ENCODE measurements at regions of chr10 and their contacts with region 1.

Region 1: GRCh38 chr10:28367929-28368484 is 65.1 kb upstream of the MPP7 start:
- DNase-seq: peak; percentile 76
- ATAC-seq: peak; percentile 90
- H3K4me3 Mint-ChIP-seq: peak overlapping the region; percentile 54
- H3K27ac Mint-ChIP-seq: peak overlapping the region; percentile 96
- H3K4me1 Mint-ChIP-seq: peaks cover 44% of the 10 kb centered on the region
- H3K27me3 Mint-ChIP-seq: no peaks in the 10 kb centered on the region

Region 2: GRCh38 chr10:27504007-27504807 is 863.8 kb before region 1 on chr10 and contains the start of gene RAB18:
- CTCF ChIA-PET with region 1: interaction called, 4 read pairs
- POLR2A ChIA-PET with region 1: no interaction called
- intact Hi-C with region 1: loop called in 1 of 2 experiments (anchors 1 kb)
- DNase-seq: peak; percentile 99
- ATAC-seq: peak; percentile 98
- H3K4me3 Mint-ChIP-seq: peak within 1 kb of the TSS; percentile 93
- H3K27ac Mint-ChIP-seq: peak within 1 kb of the TSS; percentile 93
- H3K4me1 Mint-ChIP-seq: peaks cover 46% of the 10 kb centered on the region
- H3K27me3 Mint-ChIP-seq: no peaks in the 10 kb centered on the region
- total RNA-seq, gene RAB18: 44.6 to 49.3 TPM

Region 3: DNA sequence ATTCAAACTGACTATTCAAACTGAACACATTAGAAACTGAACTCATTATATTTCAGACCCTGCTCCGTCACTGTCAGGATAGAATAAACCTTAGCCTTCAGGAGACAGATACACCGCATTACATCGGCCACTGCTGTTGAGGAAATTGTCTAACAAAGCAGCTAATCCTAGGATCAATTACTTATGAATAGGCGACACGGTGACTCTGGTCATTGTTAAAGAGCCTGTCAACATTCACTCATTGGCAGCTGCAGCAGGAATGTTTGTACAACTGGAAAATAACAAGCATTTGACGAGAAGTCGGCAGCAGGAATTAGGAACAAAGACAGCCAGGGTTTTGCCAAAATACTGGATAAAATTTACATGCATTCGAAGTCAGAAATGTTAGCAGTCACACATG is 510.4 kb before region 1 on chr10:
- CTCF ChIA-PET with region 1: no interaction called
- POLR2A ChIA-PET with region 1: no interaction called
- intact Hi-C with region 1: no loop called
- DNase-seq: no peak
- ATAC-seq: no peak
- H3K4me3 Mint-ChIP-seq: no peak overlapping the region
- H3K27ac Mint-ChIP-seq: no peak overlapping the region
- H3K4me1 Mint-ChIP-seq: no peaks in the 10 kb centered on the region
- H3K27me3 Mint-ChIP-seq: peaks cover 3% of the 10 kb centered on the region

Region 4: DNA sequence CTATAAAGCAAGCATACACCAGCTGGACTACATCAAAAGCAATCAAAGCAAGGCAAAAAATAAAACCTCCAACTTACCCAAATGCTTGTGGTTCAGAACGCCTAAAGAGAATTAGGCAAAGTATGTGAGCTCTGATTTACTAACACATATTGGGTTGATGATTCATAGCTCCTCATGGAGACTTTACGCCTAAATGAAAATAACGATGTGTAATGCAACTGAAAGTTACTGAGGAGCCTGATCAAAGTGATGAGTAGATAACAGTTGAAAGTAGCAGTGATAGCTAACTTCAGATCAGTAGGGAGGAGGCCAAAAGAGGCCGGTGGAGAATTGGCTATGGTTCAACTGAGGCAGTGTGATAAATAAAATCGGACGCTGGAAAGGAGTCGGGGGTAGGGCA is 150.2 kb before region 1 on chr10:
- CTCF ChIA-PET with region 1: no interaction called
- POLR2A ChIA-PET with region 1: no interaction called
- intact Hi-C with region 1: loop called in 1 of 2 experiments (anchors 1 kb)
- DNase-seq: peak; percentile 39
- ATAC-seq: peak; percentile 98
- H3K4me3 Mint-ChIP-seq: no peak overlapping the region
- H3K27ac Mint-ChIP-seq: no peak overlapping the region
- H3K4me1 Mint-ChIP-seq: peaks cover 39% of the 10 kb centered on the region
- H3K27me3 Mint-ChIP-seq: no peaks in the 10 kb centered on the region

Region 5: GRCh38 chr10:28302638-28303488 is 65.1 kb before region 1 on chr10 and contains the start of gene MPP7:
- CTCF ChIA-PET with region 1: interaction called, 26 read pairs
- POLR2A ChIA-PET with region 1: interaction called, 7 read pairs
- intact Hi-C with region 1: loop called (anchors 1 kb)
- DNase-seq: peak; percentile 97
- ATAC-seq: peak; percentile 97
- H3K4me3 Mint-ChIP-seq: peak within 1 kb of the TSS; percentile 90
- H3K27ac Mint-ChIP-seq: peak within 1 kb of the TSS; percentile 80
- H3K4me1 Mint-ChIP-seq: peaks cover 49% of the 10 kb centered on the region
- H3K27me3 Mint-ChIP-seq: no peaks in the 10 kb centered on the region
- total RNA-seq, gene MPP7: 10.9 to 11.0 TPM

Region 6: DNA sequence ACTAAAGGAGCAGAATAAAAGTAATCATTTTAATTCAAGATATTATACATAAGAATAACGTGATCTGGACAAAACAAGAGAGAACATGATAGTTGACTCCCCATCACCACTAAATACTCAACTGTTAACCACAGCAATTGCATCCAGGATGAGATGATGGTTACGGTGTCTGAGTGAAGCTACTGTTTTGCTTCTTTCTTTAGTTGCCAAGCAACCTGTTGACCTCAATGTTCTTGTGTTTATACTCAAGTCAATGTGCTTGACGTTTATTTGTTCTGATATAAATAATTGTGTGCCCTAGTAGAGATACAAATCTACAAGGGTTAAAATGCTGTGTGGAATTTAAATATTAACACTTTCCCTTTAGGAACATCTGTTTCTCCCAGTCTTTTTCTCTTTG is 33.7 kb before region 1 on chr10:
- CTCF ChIA-PET with region 1: interaction called, 19 read pairs
- POLR2A ChIA-PET with region 1: interaction called, 26 read pairs
- intact Hi-C with region 1: loop called (anchors 1 kb)
- DNase-seq: peak; percentile 43
- ATAC-seq: peak; percentile 62
- H3K4me3 Mint-ChIP-seq: peak overlapping the region; percentile 79
- H3K27ac Mint-ChIP-seq: peak overlapping the region; percentile 100
- H3K4me1 Mint-ChIP-seq: peaks cover 70% of the 10 kb centered on the region
- H3K27me3 Mint-ChIP-seq: no peaks in the 10 kb centered on the region

Region 7: GRCh38 chr10:28355376-28355775 is 12.6 kb before region 1 on chr10:
- CTCF ChIA-PET with region 1: interaction called, 10 read pairs
- POLR2A ChIA-PET with region 1: interaction called, 3 read pairs
- intact Hi-C with region 1: no loop called
- DNase-seq: no peak
- ATAC-seq: no peak
- H3K4me3 Mint-ChIP-seq: no peak overlapping the region
- H3K27ac Mint-ChIP-seq: no peak overlapping the region
- H3K4me1 Mint-ChIP-seq: peaks cover 2% of the 10 kb centered on the region
- H3K27me3 Mint-ChIP-seq: no peaks in the 10 kb centered on the region

Region 8: DNA sequence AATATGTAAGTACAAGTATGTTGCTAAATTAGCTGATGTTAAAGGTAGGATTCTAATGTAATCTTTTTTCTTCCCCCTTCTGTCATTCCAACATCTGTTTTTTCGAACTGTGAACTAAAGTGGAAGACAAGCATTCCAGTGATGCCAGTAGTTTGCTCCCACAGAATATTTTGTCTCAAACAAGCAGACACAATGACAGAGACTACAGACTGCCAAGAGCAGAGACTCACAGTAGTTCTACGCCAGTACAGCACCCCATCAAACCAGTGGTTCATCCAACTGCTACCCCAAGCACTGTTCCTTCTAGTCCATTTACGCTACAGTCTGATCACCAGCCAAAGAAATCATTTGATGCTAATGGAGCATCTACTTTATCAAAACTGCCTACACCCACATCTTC is 227.6 kb after region 1 on chr10:
- CTCF ChIA-PET with region 1: no interaction called
- POLR2A ChIA-PET with region 1: no interaction called
- intact Hi-C with region 1: no loop called
- DNase-seq: no peak
- ATAC-seq: no peak
- H3K4me3 Mint-ChIP-seq: no peak overlapping the region
- H3K27ac Mint-ChIP-seq: no peak overlapping the region
- H3K4me1 Mint-ChIP-seq: peaks cover 67% of the 10 kb centered on the region
- H3K27me3 Mint-ChIP-seq: no peaks in the 10 kb centered on the region

Region 9: GRCh38 chr10:29397221-29397620 is 1029.2 kb after region 1 on chr10:
- CTCF ChIA-PET with region 1: no interaction called
- POLR2A ChIA-PET with region 1: no interaction called
- intact Hi-C with region 1: no loop called
- DNase-seq: no peak
- ATAC-seq: no peak
- H3K4me3 Mint-ChIP-seq: no peak overlapping the region
- H3K27ac Mint-ChIP-seq: no peak overlapping the region
- H3K4me1 Mint-ChIP-seq: no peaks in the 10 kb centered on the region
- H3K27me3 Mint-ChIP-seq: peaks cover 10% of the 10 kb centered on the region

Measured in activated CD4-positive, alpha-beta T cell treated with anti-CD3 and anti-CD28 coated beads for 36 hours (primary cell).